ENCODE measurements at regions of chr21 and their contacts with region 1.

Region 1: DNA sequence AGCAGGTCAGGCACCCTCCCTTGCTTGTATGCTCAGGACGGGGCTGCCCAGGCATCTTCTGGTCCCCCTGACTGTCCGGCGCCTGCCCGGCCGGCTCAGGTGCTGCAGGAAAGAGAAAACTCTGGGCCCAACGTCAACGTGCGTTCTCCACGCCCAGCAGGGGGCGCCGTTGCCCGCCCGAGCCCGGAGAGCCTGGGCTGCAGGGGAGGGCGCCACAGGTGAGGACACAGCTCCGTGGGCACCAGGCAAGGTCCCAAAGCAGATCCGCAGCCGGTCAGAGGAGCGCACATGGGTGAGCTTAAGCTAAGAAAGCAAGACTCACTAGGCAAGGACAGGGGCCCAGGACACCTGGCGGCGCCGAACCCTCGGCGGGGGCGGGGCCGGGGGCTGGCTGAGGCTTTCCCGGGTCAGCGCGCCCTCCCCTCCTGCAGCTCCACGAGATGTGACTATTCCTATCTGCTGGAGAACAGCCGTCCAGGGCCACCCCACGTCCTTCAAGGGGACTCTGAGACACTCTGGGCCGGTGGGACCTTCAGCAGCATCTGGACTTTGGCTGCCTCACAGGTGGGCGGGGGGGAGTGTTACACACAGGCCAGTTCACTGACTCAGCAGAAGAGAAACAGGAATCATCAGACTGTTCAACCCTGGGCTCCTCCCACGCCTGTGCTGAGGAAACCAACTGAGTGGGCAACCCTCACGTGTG is 29.3 kb downstream of the KRTAP10-1 start:
- DNase-seq: peak; percentile 82
- H3K4me3 Mint-ChIP-seq: no peak overlapping the region
- H3K27ac Mint-ChIP-seq: no peak overlapping the region
- H3K4me1 Mint-ChIP-seq: no peaks in the 10 kb centered on the region
- H3K27me3 Mint-ChIP-seq: peaks cover 35% of the 10 kb centered on the region
- CTCF ChIP-seq: peak; percentile 60

Region 2: GRCh38 chr21:44736291-44737004 is 225.8 kb after region 1 on chr21:
- CTCF ChIA-PET with region 1: no interaction called
- intact Hi-C with region 1: no loop called
- DNase-seq: peak; percentile 82
- H3K4me3 Mint-ChIP-seq: no peak overlapping the region
- H3K27ac Mint-ChIP-seq: no peak overlapping the region
- H3K4me1 Mint-ChIP-seq: no peaks in the 10 kb centered on the region
- H3K27me3 Mint-ChIP-seq: peaks cover 80% of the 10 kb centered on the region
- CTCF ChIP-seq: no peak

Region 3: GRCh38 chr21:44792702-44793591 is 282.3 kb after region 1 on chr21:
- CTCF ChIA-PET with region 1: interaction called, 28 read pairs
- intact Hi-C with region 1: loop called (anchors 2 kb)
- DNase-seq: peak; percentile 50
- H3K4me3 Mint-ChIP-seq: no peak overlapping the region
- H3K27ac Mint-ChIP-seq: no peak overlapping the region
- H3K4me1 Mint-ChIP-seq: no peaks in the 10 kb centered on the region
- H3K27me3 Mint-ChIP-seq: no peaks in the 10 kb centered on the region
- CTCF ChIP-seq: peak; percentile 49